ENCODE measurements at regions of chr11 and their contacts with region 1.

Region 1: GRCh38 chr11:58924230-58924629 is 15.1 kb upstream of the GLYATL1 start:
- DNase-seq: no peak
- H3K4me3 ChIP-seq: no peak overlapping the region
- H3K27ac ChIP-seq: no peak overlapping the region
- H3K4me1 ChIP-seq: no peaks in the 10 kb centered on the region
- H3K27me3 ChIP-seq: no peaks in the 10 kb centered on the region
- CTCF ChIP-seq: no peak

Region 2: GRCh38 chr11:58994171-58994570 is 69.9 kb after region 1 on chr11:
- CTCF ChIA-PET with region 1: no interaction called
- POLR2A ChIA-PET with region 1: no interaction called
- intact Hi-C with region 1: loop called (anchors 2 kb)
- DNase-seq: no peak
- H3K4me3 ChIP-seq: no peak overlapping the region
- H3K27ac ChIP-seq: no peak overlapping the region
- H3K4me1 ChIP-seq: no peaks in the 10 kb centered on the region
- H3K27me3 ChIP-seq: peaks cover 39% of the 10 kb centered on the region
- CTCF ChIP-seq: no peak